ENCODE measurements at regions of chr6 and their contacts with region 1.

Region 1: GRCh38 chr6:25288143-25288917 is 9.2 kb downstream of the CARMIL1 start:
- DNase-seq: no peak
- ATAC-seq: no peak; the same call in none of the 3 replicates
- H3K4me3 ChIP-seq: no peak overlapping the region
- H3K27ac ChIP-seq: no peak overlapping the region
- H3K4me1 ChIP-seq: no peaks in the 10 kb centered on the region
- H3K27me3 ChIP-seq: no peaks in the 10 kb centered on the region
- CTCF ChIP-seq: no peak
- EP300 ChIP-seq: no peak
- POLR2A ChIP-seq: no peak
- RAD21 ChIP-seq: no peak

Region 2: GRCh38 chr6:25083784-25084507 is 204.4 kb before region 1 on chr6:
- CTCF ChIA-PET with region 1: no interaction called
- POLR2A ChIA-PET with region 1: no interaction called
- RAD21 ChIA-PET with region 1: no interaction called
- SMC1A ChIA-PET with region 1: no interaction called
- in situ Hi-C with region 1: no loop called
- intact Hi-C with region 1: no loop called
- DNase-seq: no peak
- ATAC-seq: no peak
- H3K4me3 ChIP-seq: no peak overlapping the region
- H3K27ac ChIP-seq: no peak overlapping the region
- H3K4me1 ChIP-seq: no peaks in the 10 kb centered on the region; the same call in 1 of the 2 replicates
- H3K27me3 ChIP-seq: no peaks in the 10 kb centered on the region
- CTCF ChIP-seq: no peak
- EP300 ChIP-seq: no peak
- POLR2A ChIP-seq: no peak
- RAD21 ChIP-seq: no peak

Region 3: DNA sequence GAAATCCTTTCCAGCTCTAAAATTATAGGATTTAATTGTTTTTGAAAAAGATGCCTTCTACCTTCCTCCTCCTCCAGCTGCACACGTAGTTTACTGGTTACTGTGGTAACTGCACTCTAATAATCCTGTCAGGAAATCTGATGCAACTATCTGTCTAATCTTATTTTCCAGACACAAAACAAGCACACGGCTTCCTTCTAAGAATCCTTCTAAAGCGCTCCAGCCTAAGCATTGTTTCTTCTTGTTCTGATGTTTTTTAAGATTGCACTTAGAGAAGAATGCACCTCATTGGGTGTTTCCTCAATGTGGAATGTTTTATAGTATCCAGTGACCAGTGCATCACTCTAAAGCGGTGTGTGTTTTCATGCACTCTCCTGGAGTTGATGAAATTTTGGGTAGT is 54.5 kb after region 1 on chr6:
- CTCF ChIA-PET with region 1: no interaction called
- POLR2A ChIA-PET with region 1: interaction called, 10 read pairs
- RAD21 ChIA-PET with region 1: interaction called, 3 read pairs
- SMC1A ChIA-PET with region 1: no interaction called
- in situ Hi-C with region 1: no loop called
- intact Hi-C with region 1: no loop called
- DNase-seq: no peak
- ATAC-seq: no peak
- H3K4me3 ChIP-seq: no peak overlapping the region
- H3K27ac ChIP-seq: no peak overlapping the region
- H3K4me1 ChIP-seq: peaks cover 9% of the 10 kb centered on the region
- H3K27me3 ChIP-seq: 0 out of 4 replicates have a peak, but pooled peaks cover 0 to 2% of the 10 kb centered on the region in 2 experiments
- CTCF ChIP-seq: no peak
- EP300 ChIP-seq: no peak
- POLR2A ChIP-seq: no peak
- RAD21 ChIP-seq: no peak